Transverse colon (tissue), 4 donors: ENCODE measurements at regions of chr18 and their contacts with region 1.

Region 1: GRCh38 chr18:5890331-5891183 is 4.8 kb downstream of the TMEM200C start:
- DNase-seq: no peak
- H3K4me3 ChIP-seq: peak overlapping the region in 3 of 4 donors; percentile 17 to 66 (median 38)
- H3K27ac ChIP-seq: no peak overlapping the region
- H3K4me1 ChIP-seq: peaks cover 0 to 15% (median 7%) of the 10 kb centered on the region in 4 donors
- H3K27me3 ChIP-seq: peaks cover 91% of the 10 kb centered on the region
- CTCF ChIP-seq: peak in 3 of 5 experiments; percentile 44 to 55 (median 51)
- EP300 ChIP-seq: no peak
- POLR2A ChIP-seq: no peak

Region 2: GRCh38 chr18:5600378-5601071 is 290.0 kb before region 1 on chr18:
- in situ Hi-C with region 1: no loop called
- intact Hi-C with region 1: loop called (anchors 5 kb)
- DNase-seq: no peak
- H3K4me3 ChIP-seq: no peak overlapping the region
- H3K27ac ChIP-seq: no peak overlapping the region
- H3K4me1 ChIP-seq: peaks cover 0 to 11% (median 3%) of the 10 kb centered on the region in 4 donors
- H3K27me3 ChIP-seq: no peaks in the 10 kb centered on the region
- CTCF ChIP-seq: peak; percentile 25 to 37 (median 33)
- EP300 ChIP-seq: no peak
- POLR2A ChIP-seq: no peak

Region 3: DNA sequence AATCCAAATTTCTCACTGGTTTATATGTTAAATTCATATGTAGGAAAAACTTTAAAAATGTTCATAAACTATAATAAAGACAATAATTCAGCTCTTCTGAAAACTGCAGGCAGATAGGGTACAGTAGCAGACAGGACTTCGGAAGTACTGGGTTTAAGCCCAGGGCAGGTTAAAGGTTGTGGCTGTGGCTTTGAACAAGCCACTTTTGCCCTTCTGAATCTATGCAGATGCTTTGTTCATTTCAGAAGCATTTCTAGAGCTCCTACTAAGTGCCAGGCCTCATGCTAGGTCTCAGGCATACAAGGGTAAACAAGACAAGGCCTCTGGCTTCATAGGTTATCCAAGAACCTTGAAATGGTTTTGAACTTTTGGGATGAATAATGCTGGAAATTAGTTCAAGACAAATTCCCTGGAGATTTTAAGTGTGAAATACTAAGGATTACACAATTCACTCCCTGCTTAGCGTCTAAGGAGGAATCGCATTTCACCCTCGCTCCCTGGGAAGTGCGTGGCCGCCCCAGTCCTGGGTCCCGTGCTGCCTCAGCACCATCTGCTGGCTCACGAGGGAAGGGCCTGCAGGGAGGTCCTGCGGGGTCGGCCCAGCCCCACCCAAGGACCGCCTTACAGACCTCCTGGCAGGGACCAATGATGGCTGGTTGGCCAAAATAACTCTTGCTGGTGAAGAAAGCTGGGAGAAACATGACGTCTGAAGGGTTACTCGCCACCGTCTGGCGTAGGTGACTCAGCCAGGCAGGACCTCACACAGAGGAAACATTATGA is 591.8 kb after region 1 on chr18:
- in situ Hi-C with region 1: loop called in 1 of 4 experiments (anchors 25 kb)
- intact Hi-C with region 1: no loop called
- DNase-seq: peak; percentile 41
- H3K4me3 ChIP-seq: no peak overlapping the region
- H3K27ac ChIP-seq: no peak overlapping the region
- H3K4me1 ChIP-seq: no peaks in the 10 kb centered on the region
- H3K27me3 ChIP-seq: no peaks in the 10 kb centered on the region
- CTCF ChIP-seq: peak; percentile 55 to 67 (median 57)
- EP300 ChIP-seq: no peak
- POLR2A ChIP-seq: no peak

Region 4: DNA sequence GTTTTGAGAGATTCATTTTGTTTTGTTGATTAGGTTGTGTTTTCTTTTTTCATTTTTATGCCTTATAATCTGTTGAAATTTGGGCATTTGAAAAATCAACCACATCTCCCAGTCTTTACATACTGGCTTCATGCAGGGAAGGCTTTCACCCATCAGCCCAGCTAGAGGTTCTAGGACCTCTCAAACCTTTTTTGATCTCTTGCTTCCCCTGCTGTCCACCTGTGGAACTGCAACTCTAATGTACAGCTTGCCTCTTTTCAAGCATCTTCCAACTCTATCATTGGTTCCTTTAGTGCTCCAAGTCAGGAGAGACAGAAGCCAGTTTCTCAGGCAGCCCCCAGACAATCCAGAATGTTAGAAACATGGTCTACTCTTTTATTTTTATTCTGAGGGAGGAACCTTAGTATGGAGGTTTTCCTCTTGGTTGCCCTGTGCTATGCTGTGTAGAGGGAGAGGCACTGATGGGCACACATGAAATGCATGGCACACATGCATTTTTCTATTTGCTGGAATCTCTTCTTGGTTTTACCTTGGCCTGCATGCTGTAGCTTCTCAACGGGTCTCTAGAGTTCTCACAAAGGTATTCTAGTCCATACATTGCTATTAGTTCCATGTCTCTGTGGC is 631.4 kb after region 1 on chr18:
- in situ Hi-C with region 1: loop called in 1 of 4 experiments (anchors 25 kb)
- intact Hi-C with region 1: no loop called
- DNase-seq: peak; percentile 50
- H3K4me3 ChIP-seq: no peak overlapping the region
- H3K27ac ChIP-seq: no peak overlapping the region
- H3K4me1 ChIP-seq: no peaks in the 10 kb centered on the region
- H3K27me3 ChIP-seq: no peaks in the 10 kb centered on the region
- CTCF ChIP-seq: peak; percentile 60 to 73 (median 68)
- EP300 ChIP-seq: no peak
- POLR2A ChIP-seq: no peak

Region 5: GRCh38 chr18:6885992-6886796 is 995.6 kb after region 1 on chr18:
- in situ Hi-C with region 1: loop called in 3 of 4 experiments (anchors 25 kb)
- intact Hi-C with region 1: no loop called
- DNase-seq: peak; percentile 14
- H3K4me3 ChIP-seq: no peak overlapping the region
- H3K27ac ChIP-seq: no peak overlapping the region
- H3K4me1 ChIP-seq: peaks cover 0 to 4% (median 0%) of the 10 kb centered on the region in 4 donors
- H3K27me3 ChIP-seq: no peaks in the 10 kb centered on the region
- CTCF ChIP-seq: peak; percentile 51 to 61 (median 57)
- EP300 ChIP-seq: no peak
- POLR2A ChIP-seq: no peak